ENCODE measurements at regions of chr5 and their contacts with region 1.

Region 1: DNA sequence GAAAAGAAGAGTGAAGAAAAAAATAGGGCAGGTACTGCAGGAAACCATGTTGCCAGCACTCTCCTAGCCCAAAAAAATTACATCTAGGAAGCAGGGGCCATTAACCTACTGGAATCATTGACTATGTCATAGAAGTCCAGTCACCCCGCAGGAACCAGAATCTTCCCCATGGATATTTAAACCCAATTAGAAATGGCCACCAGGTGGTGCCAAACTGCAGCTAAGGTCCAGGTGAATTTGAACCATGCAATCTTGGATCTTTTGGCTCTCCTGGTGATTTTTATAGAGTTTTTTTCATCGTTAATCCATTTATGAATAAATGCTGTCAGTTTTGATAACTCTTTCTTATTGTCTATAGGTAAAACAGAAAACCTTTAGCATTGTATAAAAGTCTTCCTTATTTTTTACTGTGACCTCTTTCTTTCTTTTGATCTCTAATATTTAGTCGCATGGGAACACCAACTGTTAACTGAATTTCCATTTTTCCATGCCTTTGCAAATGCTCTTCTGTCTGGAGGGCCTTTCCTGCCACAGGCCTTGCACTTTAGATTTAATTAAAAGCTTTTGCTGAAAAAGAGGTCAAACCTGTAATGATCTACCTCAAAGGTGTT is 147.5 kb upstream of the FGF10 start:
- DNase-seq: peak; percentile 72
- H3K4me3 Mint-ChIP-seq: no peak overlapping the region
- H3K27ac Mint-ChIP-seq: no peak overlapping the region
- H3K4me1 Mint-ChIP-seq: peaks cover 17% of the 10 kb centered on the region
- H3K27me3 Mint-ChIP-seq: no peaks in the 10 kb centered on the region
- CTCF ChIP-seq: peak; percentile 76

Region 2: DNA sequence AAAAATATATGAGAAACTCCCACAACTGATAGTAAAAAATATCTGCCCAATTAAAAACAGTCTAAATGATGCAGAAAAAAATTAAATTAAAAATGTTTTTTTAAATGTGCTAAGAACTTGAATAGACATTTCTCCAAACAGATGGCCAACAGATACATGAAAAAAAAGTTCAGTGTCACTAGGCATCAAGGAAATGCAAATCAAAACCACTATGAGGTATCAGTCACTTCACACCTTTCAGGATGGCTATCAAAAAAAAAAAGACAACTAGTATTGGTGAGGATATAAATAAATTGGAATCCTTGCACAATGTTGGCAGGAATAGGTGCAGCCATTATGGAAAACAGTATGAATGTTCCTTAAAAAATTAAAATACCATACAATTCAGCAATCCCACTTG is 1399.4 kb before region 1 on chr5:
- CTCF ChIA-PET with region 1: no interaction called
- POLR2A ChIA-PET with region 1: no interaction called
- intact Hi-C with region 1: no loop called
- DNase-seq: no peak
- H3K4me3 Mint-ChIP-seq: no peak overlapping the region
- H3K27ac Mint-ChIP-seq: no peak overlapping the region
- H3K4me1 Mint-ChIP-seq: no peaks in the 10 kb centered on the region
- H3K27me3 Mint-ChIP-seq: no peaks in the 10 kb centered on the region
- CTCF ChIP-seq: no peak

Region 3: GRCh38 chr5:43661102-43661501 is 875.7 kb before region 1 on chr5:
- CTCF ChIA-PET with region 1: no interaction called
- POLR2A ChIA-PET with region 1: no interaction called
- intact Hi-C with region 1: loop called (anchors 5 kb)
- DNase-seq: peak; percentile 61
- H3K4me3 Mint-ChIP-seq: no peak overlapping the region
- H3K27ac Mint-ChIP-seq: no peak overlapping the region
- H3K4me1 Mint-ChIP-seq: no peaks in the 10 kb centered on the region
- H3K27me3 Mint-ChIP-seq: no peaks in the 10 kb centered on the region
- CTCF ChIP-seq: peak; percentile 48

Region 4: DNA sequence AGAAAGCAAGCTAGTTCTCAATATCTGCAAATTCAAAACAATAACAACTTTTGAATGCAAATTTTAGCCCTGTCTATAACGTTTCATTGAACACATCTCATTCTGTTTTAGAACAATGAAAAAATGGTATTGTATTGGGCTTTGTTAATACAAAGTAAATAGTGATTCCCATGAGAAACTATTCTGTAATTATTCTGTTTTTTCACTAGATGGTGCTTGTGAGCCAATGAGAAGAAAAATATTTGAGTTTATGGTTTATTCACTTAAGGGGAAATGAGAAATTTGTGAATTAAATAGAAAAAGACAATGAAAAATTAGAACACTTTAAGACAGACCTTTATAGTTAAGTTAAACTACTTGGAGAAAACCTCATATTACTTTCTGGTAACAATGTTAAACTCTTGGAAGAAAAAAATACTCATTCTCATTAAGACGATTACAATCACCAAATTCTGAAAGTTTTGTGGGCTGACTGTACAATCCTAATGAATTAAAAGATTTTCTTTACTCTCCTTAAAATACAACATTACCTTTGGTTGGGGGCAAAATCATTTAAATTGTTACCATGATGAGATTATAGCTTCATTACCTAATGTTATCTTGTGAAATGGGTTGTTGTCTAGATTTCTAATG is 806.8 kb before region 1 on chr5:
- CTCF ChIA-PET with region 1: interaction called, 3 read pairs
- POLR2A ChIA-PET with region 1: no interaction called
- intact Hi-C with region 1: loop called (anchors 5 kb)
- DNase-seq: peak; percentile 46
- H3K4me3 Mint-ChIP-seq: no peak overlapping the region
- H3K27ac Mint-ChIP-seq: no peak overlapping the region
- H3K4me1 Mint-ChIP-seq: peaks cover 7% of the 10 kb centered on the region
- H3K27me3 Mint-ChIP-seq: no peaks in the 10 kb centered on the region
- CTCF ChIP-seq: peak; percentile 59

Region 5: DNA sequence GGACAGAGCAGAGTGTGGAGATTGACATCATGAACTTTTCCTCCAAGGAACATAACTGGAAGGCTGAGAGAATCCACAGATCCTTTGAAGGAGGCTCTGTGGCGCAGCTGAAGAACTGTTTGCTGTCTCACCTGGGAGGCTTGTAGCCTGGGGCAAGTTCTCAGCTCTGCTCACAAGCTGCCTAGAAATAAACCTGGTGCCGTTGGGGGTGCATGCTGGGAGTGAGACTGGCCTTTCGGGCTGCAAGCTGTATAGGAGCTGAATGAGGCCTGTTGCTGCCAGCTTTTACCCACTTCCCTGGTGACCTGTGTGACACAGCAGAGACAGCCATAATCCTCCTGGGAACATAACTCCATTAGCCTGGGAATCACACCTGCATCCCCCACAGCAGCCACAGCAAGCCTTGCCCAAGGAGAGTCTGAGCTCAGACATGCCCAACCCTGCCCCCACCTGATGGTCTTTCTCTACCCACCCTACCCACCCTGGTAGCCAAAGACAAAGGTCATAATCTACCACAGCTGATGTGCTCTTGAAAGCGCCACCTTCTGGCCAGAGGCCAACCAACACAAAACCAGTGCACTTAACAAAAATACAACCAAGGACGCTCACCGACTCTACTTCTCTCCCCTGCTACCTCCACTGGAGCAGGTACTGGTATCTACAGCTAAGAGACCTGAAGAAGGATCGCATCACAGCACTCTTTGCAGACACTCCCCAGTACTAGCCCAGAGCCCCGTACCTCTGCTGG is 66.9 kb after region 1 on chr5:
- CTCF ChIA-PET with region 1: no interaction called
- POLR2A ChIA-PET with region 1: no interaction called
- intact Hi-C with region 1: loop called (anchors 2 kb)
- DNase-seq: peak; percentile 30
- H3K4me3 Mint-ChIP-seq: no peak overlapping the region
- H3K27ac Mint-ChIP-seq: no peak overlapping the region
- H3K4me1 Mint-ChIP-seq: no peaks in the 10 kb centered on the region
- H3K27me3 Mint-ChIP-seq: no peaks in the 10 kb centered on the region
- CTCF ChIP-seq: peak; percentile 11

Region 6: GRCh38 chr5:44719856-44720255 is 183.1 kb after region 1 on chr5:
- CTCF ChIA-PET with region 1: no interaction called
- POLR2A ChIA-PET with region 1: no interaction called
- intact Hi-C with region 1: no loop called
- DNase-seq: no peak
- H3K4me3 Mint-ChIP-seq: no peak overlapping the region
- H3K27ac Mint-ChIP-seq: no peak overlapping the region
- H3K4me1 Mint-ChIP-seq: no peaks in the 10 kb centered on the region
- H3K27me3 Mint-ChIP-seq: no peaks in the 10 kb centered on the region
- CTCF ChIP-seq: no peak